ENCODE measurements at regions of chr18 and their contacts with region 1.

Region 1: DNA sequence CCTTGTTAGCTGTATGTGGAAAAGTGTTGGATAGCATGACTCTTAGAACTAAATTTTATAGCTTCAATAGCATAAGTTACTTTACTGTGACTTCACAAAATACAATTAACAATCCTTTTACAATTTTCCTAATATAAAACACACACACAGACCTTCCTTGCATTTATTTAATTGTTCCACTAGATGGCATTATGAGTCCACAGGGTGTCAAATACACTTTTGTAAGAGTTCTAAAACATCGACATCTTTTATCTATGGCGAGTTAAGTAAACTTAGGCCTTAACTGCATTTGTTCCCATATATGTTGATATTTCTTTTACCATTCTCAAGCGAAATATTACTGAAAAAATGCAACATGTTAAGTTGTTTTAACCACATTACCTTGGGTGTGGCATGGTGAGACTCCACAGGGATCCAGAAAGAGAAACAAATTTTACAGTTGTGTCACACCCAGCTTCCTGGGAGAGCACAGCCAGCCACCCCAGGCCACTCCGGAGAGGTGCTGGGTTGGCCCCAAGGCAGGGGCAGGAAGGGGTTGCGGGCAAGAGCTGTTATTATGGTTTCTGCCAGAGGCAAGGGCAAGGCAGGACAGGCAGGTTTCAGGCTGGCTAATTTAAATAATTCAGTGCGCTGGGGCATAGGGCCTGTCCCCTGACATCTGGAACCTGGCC is 312.4 kb upstream of the MC4R start:
- DNase-seq: no peak
- ATAC-seq: no peak

Region 2: DNA sequence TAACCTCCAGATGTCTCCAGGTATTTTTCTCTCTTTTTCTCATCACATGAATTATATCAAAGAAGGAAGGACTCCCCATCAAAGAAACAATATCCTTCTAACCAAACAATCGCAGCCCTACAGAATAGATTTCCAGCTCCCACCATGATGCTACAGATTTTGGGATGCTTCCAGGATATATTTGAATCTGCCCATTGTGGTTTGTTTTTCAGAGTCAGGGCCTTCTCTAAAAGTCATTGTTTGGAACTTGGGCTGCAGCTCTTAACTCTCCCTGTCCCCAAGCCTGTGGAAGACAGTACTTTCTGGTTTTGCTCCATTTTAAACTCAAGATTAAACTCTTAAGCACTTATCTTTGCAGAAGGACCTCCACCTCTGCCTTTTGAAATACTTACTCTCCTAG is 561.9 kb before region 1 on chr18:
- intact Hi-C with region 1: no loop called
- DNase-seq: no peak
- ATAC-seq: no peak

Region 3: GRCh38 chr18:60577457-60577856 is 107.5 kb before region 1 on chr18:
- intact Hi-C with region 1: no loop called
- DNase-seq: no peak
- ATAC-seq: no peak

Region 4: DNA sequence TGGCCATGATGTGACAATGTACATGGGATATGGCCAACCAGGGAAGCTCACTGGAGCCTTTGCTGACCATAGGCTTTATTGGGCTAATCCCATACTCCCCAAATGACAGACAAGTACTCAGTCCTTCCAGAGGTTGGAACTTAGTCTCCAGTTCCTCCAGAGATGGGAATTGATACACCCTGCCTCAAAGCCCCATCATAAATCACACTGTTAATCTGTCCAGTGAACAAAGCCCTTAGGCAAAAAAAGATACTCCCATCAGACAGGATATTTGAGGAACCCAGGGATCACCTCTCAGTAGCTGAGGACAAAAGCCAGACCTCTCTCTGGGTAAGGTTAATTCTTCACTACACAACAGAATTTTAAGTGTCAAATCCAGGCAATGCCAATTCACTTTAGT is 400.8 kb after region 1 on chr18:
- intact Hi-C with region 1: loop called in 1 of 2 experiments (anchors 10 kb)
- DNase-seq: no peak
- ATAC-seq: no peak

Measured in left cardiac atrium (tissue), 4 donors.